Uterus (tissue), 4 donors: ENCODE measurements at regions of chr1 and their contacts with region 1.

Region 1: GRCh38 chr1:67561704-67562113 is 123.3 kb upstream of the GADD45A start:
- DNase-seq: peak; percentile 81 to 92
- H3K4me3 ChIP-seq: no peak overlapping the region
- H3K27ac ChIP-seq: peak overlapping the region in 1 of 2 donors; percentile 71
- H3K4me1 ChIP-seq: peaks cover 0 to 5% of the 10 kb centered on the region in 2 donors
- H3K27me3 ChIP-seq: no peaks in the 10 kb centered on the region
- CTCF ChIP-seq: peak; percentile 72 to 88 (median 77)
- POLR2A ChIP-seq: no peak

Region 2: DNA sequence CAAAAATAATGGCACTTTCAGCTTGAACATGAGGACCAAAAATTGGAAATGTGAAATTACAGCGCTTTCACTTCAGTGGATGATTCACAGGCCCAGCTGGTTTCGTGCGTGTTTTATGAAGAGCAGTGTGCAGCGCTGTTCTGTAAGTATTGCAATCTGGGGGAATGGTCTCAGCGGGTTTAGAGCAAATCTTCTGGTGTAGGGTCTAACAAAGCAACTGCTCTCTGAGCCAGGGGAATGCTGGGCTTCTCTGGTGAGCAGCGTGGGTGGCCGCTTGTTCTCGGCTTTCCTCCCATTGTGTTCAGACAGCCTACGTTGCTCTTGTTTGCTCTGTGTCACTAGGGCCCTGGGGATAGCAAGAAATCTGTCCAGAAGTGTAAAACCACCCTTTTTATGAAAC is 80.9 kb after region 1 on chr1:
- intact Hi-C with region 1: no loop called
- DNase-seq: no peak
- H3K4me3 ChIP-seq: no peak overlapping the region
- H3K27ac ChIP-seq: no peak overlapping the region
- H3K4me1 ChIP-seq: peaks cover 13 to 17% of the 10 kb centered on the region in 2 donors
- H3K27me3 ChIP-seq: no peaks in the 10 kb centered on the region
- CTCF ChIP-seq: no peak
- POLR2A ChIP-seq: no peak

Region 3: GRCh38 chr1:67664048-67664447 is 102.3 kb after region 1 on chr1:
- intact Hi-C with region 1: no loop called
- DNase-seq: no peak
- H3K4me3 ChIP-seq: no peak overlapping the region
- H3K27ac ChIP-seq: no peak overlapping the region
- H3K4me1 ChIP-seq: no peaks in the 10 kb centered on the region
- H3K27me3 ChIP-seq: no peaks in the 10 kb centered on the region
- CTCF ChIP-seq: no peak
- POLR2A ChIP-seq: no peak

Region 4: DNA sequence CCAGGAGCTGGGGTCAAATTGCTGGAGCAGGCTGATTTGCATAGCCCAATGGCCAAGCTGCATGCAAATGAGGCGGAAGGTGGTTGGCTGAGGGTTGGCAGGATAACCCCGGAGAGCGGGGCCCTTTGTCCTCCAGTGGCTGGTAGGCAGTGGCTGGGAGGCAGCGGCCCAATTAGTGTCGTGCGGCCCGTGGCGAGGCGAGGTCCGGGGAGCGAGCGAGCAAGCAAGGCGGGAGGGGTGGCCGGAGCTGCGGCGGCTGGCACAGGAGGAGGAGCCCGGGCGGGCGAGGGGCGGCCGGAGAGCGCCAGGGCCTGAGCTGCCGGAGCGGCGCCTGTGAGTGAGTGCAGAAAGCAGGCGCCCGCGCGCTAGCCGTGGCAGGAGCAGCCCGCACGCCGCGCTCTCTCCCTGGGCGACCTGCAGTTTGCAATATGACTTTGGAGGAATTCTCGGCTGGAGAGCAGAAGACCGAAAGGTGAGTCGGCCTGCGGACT is 123.4 kb after region 1 on chr1 and contains the start of gene GADD45A:
- intact Hi-C with region 1: loop called (anchors 10 kb)
- DNase-seq: peak; percentile 98 to 99
- H3K4me3 ChIP-seq: peak within 1 kb of the TSS; percentile 60 to 70
- H3K27ac ChIP-seq: peak within 1 kb of the TSS; percentile 83 to 92
- H3K4me1 ChIP-seq: peaks cover 0 to 6% of the 10 kb centered on the region in 2 donors
- H3K27me3 ChIP-seq: no peaks in the 10 kb centered on the region
- CTCF ChIP-seq: peak in 1 of 4 experiments; percentile 45
- POLR2A ChIP-seq: peak; percentile 100
- total RNA-seq, gene GADD45A: 11.1 to 35.6 (median 20.3) TPM

Region 5: GRCh38 chr1:67749844-67750689 is 188.4 kb after region 1 on chr1:
- intact Hi-C with region 1: loop called (anchors 10 kb)
- DNase-seq: peak in 1 of 2 donors; percentile 55
- H3K4me3 ChIP-seq: no peak overlapping the region
- H3K27ac ChIP-seq: peak overlapping the region; percentile 86 to 88
- H3K4me1 ChIP-seq: peaks cover 0 to 24% of the 10 kb centered on the region in 2 donors
- H3K27me3 ChIP-seq: no peaks in the 10 kb centered on the region
- CTCF ChIP-seq: no peak
- POLR2A ChIP-seq: no peak